Caco-2 (cell line): ENCODE measurements at regions of chr11 and their contacts with region 1.

Region 1: DNA sequence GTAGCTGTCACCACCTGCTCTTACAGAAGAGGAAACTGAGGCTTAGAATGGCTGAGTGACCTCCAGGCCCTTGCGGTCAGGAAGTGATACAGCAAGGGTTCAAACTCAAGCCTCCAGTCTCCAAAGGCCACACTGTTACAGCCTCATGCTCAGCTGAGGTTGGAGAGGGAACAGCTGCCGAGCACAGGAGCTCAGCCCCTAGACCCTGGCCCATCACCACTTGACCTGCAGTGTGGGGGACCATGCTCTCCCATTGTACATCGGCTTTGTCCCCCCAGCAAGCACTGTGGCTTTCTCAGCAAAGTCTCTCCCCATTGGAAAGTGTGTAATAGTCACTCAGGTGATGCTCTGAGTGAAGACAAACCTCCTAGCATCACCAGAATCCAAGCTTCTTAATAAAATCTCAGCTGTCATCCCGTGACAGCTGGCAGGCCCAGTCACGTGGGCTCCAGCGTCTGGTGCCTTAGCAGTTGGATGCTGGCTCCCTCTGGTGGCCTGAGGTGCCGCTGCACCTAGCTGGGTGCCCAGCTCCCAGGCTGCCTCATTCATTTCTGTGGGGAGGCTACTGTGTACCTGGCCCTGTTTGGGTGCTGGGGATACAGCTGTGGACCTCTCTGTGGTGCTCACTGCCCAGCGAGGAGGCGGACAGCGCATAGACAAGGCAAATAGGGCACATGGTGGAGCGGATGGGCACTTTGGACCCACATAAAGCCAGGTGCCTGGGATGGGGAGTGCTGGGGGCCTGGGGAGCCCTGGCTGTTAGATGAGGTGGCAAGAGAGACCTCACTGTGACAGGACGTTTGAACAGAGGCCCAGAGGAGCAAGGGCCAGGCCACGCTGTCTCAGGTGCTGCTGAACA is 19.1 kb upstream of the MYRF start:
- DNase-seq: peak; percentile 79 to 85
- H3K4me3 ChIP-seq: no peak overlapping the region
- H3K4me3 Mint-ChIP-seq: no peak overlapping the region
- H3K27ac Mint-ChIP-seq: peak overlapping the region; percentile 84
- H3K4me1 ChIP-seq: no peaks in the 10 kb centered on the region
- H3K4me1 Mint-ChIP-seq: peaks cover 9% of the 10 kb centered on the region
- H3K27me3 ChIP-seq: no peaks in the 10 kb centered on the region
- H3K27me3 Mint-ChIP-seq: no peaks in the 10 kb centered on the region
- CTCF ChIP-seq: peak; percentile 98 to 99

Region 2: DNA sequence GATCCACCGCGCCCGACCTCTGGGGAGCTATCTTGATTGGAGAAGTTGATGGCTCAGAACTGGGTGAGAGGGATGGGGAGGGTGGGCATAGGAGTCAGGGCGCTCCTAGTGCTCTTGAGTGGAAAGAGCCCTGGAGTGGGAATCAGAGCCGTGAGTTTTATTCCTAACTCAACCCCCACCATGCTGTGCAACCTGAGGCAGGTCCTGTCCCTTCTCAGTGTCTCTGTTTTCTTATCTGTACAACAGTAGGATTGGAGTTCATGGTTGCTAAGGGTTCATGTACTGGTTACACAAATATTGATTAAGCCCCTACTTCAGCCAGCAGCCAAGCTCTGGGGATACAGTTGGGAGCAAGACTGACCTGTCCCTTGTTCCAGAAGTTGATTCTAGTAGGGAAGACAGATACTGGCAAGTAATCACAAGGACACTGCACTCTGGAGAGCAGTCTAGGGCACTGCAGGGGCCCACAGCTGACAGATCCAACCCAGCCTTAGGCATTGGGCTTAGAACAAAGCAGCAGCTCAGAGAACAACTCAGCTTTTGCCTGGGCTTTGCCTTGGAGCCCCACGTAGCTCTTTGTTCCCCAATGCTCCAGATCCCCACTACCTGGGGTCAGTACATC is 65.6 kb before region 1 on chr11:
- CTCF ChIA-PET with region 1: interaction called, 23 read pairs
- POLR2A ChIA-PET with region 1: interaction called, 6 read pairs
- intact Hi-C with region 1: no loop called
- DNase-seq: peak; percentile 43 to 54
- H3K4me3 ChIP-seq: peak overlapping the region; percentile 47
- H3K4me3 Mint-ChIP-seq: peak overlapping the region; percentile 84
- H3K27ac Mint-ChIP-seq: peak overlapping the region; percentile 88
- H3K4me1 ChIP-seq: peaks cover 46% of the 10 kb centered on the region
- H3K4me1 Mint-ChIP-seq: peaks cover 21% of the 10 kb centered on the region
- H3K27me3 ChIP-seq: no peaks in the 10 kb centered on the region
- H3K27me3 Mint-ChIP-seq: no peaks in the 10 kb centered on the region
- CTCF ChIP-seq: peak; percentile 24 to 36

Region 3: DNA sequence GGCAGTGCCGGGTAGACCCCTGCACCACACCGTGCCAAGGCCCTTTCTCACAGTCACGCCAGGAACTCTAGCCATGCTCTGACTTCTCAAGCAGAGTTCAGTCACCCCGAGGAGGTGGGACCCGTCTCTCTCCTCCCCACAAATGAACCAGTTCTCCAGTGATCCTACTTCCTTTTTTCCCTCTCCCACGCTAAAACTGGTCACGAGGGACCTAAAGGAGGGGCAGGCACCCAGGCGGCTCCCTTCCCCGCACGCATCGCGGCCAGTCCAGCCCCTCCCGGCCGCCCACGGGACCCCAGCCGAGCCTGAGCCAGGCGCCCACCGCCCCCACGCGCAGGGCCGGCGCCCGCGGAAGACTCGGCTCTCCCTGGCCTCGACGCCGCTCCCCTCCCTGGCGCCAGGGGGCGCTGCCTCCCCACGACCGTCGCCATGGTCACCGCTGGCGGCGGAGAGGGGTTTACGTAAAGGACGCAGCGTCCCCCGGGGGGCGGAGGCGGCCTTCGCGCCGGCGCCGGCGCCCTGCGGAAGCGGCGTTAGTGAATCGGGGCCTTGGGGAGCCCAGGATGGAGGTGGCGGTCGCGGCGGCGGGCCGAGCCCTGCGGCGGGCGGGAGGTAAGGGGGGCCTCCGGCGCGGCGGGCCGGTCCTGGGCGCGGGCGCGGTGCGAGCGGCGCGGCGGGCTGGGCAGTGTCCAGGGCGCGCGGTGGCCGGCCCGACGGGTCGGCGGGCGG is 53.3 kb before region 1 on chr11 and contains the start of gene DAGLA:
- CTCF ChIA-PET with region 1: interaction called, 13 read pairs
- POLR2A ChIA-PET with region 1: no interaction called
- intact Hi-C with region 1: loop called (anchors 1 kb)
- DNase-seq: peak; percentile 64 to 87
- H3K4me3 ChIP-seq: peak within 1 kb of the TSS; percentile 82
- H3K4me3 Mint-ChIP-seq: no peak within 1 kb of the TSS
- H3K27ac Mint-ChIP-seq: peak within 1 kb of the TSS; percentile 85
- H3K4me1 ChIP-seq: peaks cover 47% of the 10 kb centered on the region
- H3K4me1 Mint-ChIP-seq: peaks cover 12% of the 10 kb centered on the region
- H3K27me3 ChIP-seq: no peaks in the 10 kb centered on the region
- H3K27me3 Mint-ChIP-seq: no peaks in the 10 kb centered on the region
- CTCF ChIP-seq: peak; percentile 90 to 93
- total RNA-seq, gene DAGLA: 9.4 and 9.5 TPM in 2 replicates

Region 4: DNA sequence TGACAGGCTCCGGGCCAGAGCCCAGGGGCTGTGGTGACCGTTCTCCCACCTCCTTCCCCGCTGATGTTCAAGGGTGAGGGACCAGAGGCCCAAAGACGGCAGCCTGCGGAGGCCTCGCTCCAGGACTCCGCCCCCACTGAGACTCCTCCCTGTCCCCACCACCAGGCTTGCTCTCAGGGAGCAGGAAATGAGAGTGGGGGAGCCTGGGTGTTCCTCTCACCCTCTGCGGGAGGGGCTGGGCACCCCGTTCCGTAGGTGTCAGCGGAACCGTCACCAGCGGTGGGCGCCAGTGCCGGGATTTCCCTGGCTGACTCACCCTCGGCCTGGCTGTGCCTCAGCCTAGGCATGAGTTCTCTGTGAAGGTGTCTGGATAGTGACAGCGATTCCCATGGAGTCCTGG is 37.4 kb before region 1 on chr11:
- CTCF ChIA-PET with region 1: interaction called, 15 read pairs
- POLR2A ChIA-PET with region 1: no interaction called
- intact Hi-C with region 1: no loop called
- DNase-seq: no peak
- H3K4me3 ChIP-seq: no peak overlapping the region
- H3K4me3 Mint-ChIP-seq: no peak overlapping the region
- H3K27ac Mint-ChIP-seq: peak overlapping the region; percentile 59
- H3K4me1 ChIP-seq: peaks cover 64% of the 10 kb centered on the region
- H3K4me1 Mint-ChIP-seq: peaks cover 16% of the 10 kb centered on the region
- H3K27me3 ChIP-seq: no peaks in the 10 kb centered on the region
- H3K27me3 Mint-ChIP-seq: no peaks in the 10 kb centered on the region
- CTCF ChIP-seq: no peak

Region 5: DNA sequence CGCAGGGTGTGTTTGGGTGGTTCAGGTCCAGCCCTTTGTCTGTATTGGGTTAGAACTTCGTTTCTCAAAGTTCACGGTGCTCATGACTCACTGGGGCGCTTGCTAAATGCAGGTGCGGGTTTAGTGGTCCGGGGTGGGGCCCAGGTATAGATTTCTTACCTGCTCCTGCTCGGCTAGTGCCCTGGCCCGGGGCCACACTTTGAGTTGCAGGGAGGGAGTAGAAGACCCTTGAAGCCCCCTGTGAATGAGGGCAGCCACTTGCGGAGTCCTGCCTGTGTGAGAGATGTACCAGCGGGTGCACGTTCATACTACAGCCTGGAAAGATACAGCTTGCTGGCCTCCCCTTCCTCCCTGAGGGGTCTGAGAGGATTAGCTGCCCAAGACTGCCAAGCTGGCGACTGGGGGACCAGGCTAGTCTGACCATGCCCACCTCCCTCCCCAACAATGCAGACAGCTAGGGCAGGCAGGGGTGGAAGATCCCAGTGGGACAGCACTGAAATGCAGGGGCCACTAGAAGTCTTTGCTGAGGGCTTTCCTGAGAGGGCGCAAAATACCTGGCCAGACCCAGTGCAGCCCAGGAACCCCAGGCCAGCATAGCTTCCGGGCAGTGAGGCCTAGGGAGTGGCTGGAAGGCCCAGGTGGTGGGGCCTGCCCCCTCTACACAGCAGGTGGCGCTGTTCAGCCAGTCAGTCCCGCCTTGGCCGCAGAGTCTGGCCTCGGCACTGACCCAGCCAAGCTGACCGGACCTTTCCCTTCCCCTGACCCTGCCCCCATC is 14.0 kb after region 1 on chr11:
- CTCF ChIA-PET with region 1: interaction called, 16 read pairs
- POLR2A ChIA-PET with region 1: no interaction called
- intact Hi-C with region 1: no loop called
- DNase-seq: peak; percentile 86 to 92
- H3K4me3 ChIP-seq: no peak overlapping the region
- H3K4me3 Mint-ChIP-seq: no peak overlapping the region
- H3K27ac Mint-ChIP-seq: no peak overlapping the region
- H3K4me1 ChIP-seq: peaks cover 22% of the 10 kb centered on the region
- H3K4me1 Mint-ChIP-seq: peaks cover 7% of the 10 kb centered on the region
- H3K27me3 ChIP-seq: no peaks in the 10 kb centered on the region
- H3K27me3 Mint-ChIP-seq: no peaks in the 10 kb centered on the region
- CTCF ChIP-seq: peak; percentile 93 to 97

Region 6: GRCh38 chr11:61816736-61817455 is 83.5 kb after region 1 on chr11 and contains the start of gene FADS1:
- CTCF ChIA-PET with region 1: interaction called, 10 read pairs
- POLR2A ChIA-PET with region 1: no interaction called
- intact Hi-C with region 1: no loop called
- DNase-seq: peak; percentile 98 to 99
- H3K4me3 ChIP-seq: peak within 1 kb of the TSS; percentile 85
- H3K4me3 Mint-ChIP-seq: peak within 1 kb of the TSS; percentile 81
- H3K27ac Mint-ChIP-seq: peak within 1 kb of the TSS; percentile 90
- H3K4me1 ChIP-seq: peaks cover 16% of the 10 kb centered on the region
- H3K4me1 Mint-ChIP-seq: peaks cover 18% of the 10 kb centered on the region
- H3K27me3 ChIP-seq: no peaks in the 10 kb centered on the region
- H3K27me3 Mint-ChIP-seq: no peaks in the 10 kb centered on the region
- CTCF ChIP-seq: peak; percentile 72 to 95
- total RNA-seq, gene FADS1: 108 and 116 TPM in 2 replicates

Region 7: DNA sequence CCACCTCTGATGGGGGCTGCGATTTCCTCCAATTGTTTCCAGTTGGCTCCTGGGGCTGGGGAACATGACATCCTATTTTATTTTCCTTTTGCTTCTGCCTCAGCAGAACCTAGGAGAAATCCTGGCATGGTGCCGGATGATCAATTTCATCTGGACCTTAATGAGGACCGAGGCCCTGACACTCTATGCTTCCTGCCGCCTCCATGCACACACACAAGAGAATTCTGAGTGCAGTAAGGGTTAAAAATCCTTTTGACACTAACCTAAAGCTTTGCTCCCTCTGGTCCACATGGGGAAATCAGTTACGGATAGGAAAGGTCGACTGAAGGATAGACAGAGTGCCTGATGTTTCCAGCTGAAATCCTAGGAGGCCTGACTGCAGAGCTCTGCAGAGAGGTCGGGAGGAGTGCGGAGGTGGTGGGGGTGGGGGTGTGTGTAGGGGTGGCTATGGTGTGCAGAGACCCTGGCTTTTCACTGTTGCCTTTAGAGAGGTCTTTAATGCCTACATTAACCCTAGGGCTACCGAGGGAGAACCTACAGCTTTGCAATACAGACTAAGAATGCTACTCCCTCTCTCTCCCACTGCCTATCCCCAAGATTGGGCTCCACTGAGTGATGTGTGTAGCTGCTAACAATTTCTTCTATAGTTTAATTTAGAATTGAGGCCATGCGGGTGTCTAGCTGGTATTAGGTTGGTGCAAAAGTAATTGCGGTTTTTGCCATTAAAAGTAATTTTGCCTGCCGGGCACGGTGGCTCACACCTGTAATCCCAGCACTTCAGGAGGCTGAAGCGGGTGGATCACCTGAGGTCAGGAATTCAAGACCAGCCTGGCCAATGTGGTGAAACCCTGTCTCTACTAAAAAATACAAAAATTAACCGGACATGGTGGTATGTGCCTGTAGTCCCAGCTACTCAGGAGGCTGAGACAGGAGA is 336.9 kb after region 1 on chr11:
- CTCF ChIA-PET with region 1: no interaction called
- POLR2A ChIA-PET with region 1: no interaction called
- intact Hi-C with region 1: no loop called
- DNase-seq: no peak
- H3K4me3 ChIP-seq: no peak overlapping the region
- H3K4me3 Mint-ChIP-seq: no peak overlapping the region
- H3K27ac Mint-ChIP-seq: no peak overlapping the region
- H3K4me1 ChIP-seq: no peaks in the 10 kb centered on the region
- H3K4me1 Mint-ChIP-seq: no peaks in the 10 kb centered on the region
- H3K27me3 ChIP-seq: no peaks in the 10 kb centered on the region
- H3K27me3 Mint-ChIP-seq: peaks cover 3% of the 10 kb centered on the region
- CTCF ChIP-seq: no peak